Activated CD4-positive, alpha-beta memory T cell treated with anti-CD3 and anti-CD28 coated beads for 36 hours (primary cell): ENCODE measurements at regions of chr6 and their contacts with region 1.

Region 1: DNA sequence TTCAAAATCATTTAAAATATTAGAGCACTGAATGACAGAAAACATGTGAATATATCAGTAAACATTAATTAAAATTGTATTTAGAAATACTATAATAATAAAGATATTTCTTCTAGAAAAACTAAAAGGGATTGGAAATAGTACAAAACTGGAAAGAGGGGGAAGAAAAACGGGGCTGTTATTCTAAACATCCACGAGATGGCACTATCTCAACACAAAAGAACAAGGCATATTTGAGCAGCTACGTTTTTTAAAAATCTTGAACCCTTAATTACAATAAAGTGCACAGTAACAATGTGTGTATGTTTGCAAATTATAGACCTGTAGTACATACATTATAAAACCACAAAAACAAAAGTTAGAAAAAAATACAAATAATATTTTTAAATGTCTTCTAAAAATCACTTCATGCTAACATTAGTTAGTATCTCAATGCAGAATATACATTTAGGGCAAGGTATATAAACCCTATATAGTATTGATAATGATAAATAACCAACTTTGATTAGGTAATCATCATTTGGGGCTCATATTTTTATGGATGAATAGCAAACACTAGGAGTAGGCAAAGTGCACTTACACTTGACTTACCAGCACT is 42.5 kb upstream of the PNISR start:
- DNase-seq: no peak
- H3K4me3 Mint-ChIP-seq: no peak overlapping the region
- H3K27ac Mint-ChIP-seq: no peak overlapping the region
- H3K4me1 Mint-ChIP-seq: no peaks in the 10 kb centered on the region
- H3K27me3 Mint-ChIP-seq: no peaks in the 10 kb centered on the region

Region 2: GRCh38 chr6:99530627-99531026 is 63.0 kb after region 1 on chr6:
- CTCF ChIA-PET with region 1: no interaction called
- POLR2A ChIA-PET with region 1: no interaction called
- intact Hi-C with region 1: no loop called
- DNase-seq: no peak
- H3K4me3 Mint-ChIP-seq: no peak overlapping the region
- H3K27ac Mint-ChIP-seq: no peak overlapping the region
- H3K4me1 Mint-ChIP-seq: no peaks in the 10 kb centered on the region
- H3K27me3 Mint-ChIP-seq: no peaks in the 10 kb centered on the region

Region 3: DNA sequence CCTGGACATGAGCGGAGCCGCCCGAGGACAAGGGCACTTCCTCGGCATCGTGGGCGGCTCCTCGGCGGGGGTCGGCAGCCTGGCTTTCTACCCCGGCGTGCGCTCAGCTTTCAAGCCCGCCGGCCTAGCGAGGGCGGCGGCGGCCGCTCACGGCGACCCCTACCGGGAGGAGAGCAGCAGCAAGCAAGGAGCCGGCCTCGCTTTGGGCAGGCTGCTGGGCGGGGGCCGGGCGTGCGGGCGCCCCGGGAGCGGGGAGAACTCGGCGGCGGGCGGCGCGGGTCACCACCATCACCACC is 145.7 kb after region 1 on chr6:
- CTCF ChIA-PET with region 1: no interaction called
- POLR2A ChIA-PET with region 1: no interaction called
- intact Hi-C with region 1: loop called (anchors 5 kb)
- DNase-seq: peak; percentile 59
- H3K4me3 Mint-ChIP-seq: no peak overlapping the region
- H3K27ac Mint-ChIP-seq: no peak overlapping the region
- H3K4me1 Mint-ChIP-seq: peaks cover 25% of the 10 kb centered on the region
- H3K27me3 Mint-ChIP-seq: peaks cover 78% of the 10 kb centered on the region

Region 4: DNA sequence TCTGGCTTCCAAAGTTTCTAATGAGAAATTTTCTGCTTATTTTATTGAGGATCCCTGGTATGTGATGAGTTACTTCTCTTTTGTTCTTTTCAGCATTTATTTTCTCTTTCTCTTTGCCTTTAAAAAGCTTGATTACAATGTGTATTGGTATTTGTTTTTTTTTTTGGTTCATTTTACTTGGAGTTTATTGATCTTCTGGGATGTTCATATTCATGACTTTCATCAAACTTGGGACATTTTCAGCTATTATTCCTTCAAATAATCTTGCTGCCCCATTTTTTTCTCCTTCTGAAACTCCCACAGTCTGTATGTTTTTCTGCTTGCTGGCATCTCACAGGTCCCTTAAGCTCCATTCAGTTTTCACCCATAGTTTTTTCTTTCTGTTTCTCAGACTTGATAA is 241.5 kb after region 1 on chr6:
- CTCF ChIA-PET with region 1: no interaction called
- POLR2A ChIA-PET with region 1: no interaction called
- intact Hi-C with region 1: no loop called
- DNase-seq: no peak
- H3K4me3 Mint-ChIP-seq: no peak overlapping the region
- H3K27ac Mint-ChIP-seq: no peak overlapping the region
- H3K4me1 Mint-ChIP-seq: no peaks in the 10 kb centered on the region
- H3K27me3 Mint-ChIP-seq: no peaks in the 10 kb centered on the region

Region 5: GRCh38 chr6:99746261-99746895 is 278.8 kb after region 1 on chr6:
- CTCF ChIA-PET with region 1: interaction called, 47 read pairs
- POLR2A ChIA-PET with region 1: no interaction called
- intact Hi-C with region 1: loop called (anchors 1 kb)
- DNase-seq: peak; percentile 56
- H3K4me3 Mint-ChIP-seq: no peak overlapping the region
- H3K27ac Mint-ChIP-seq: no peak overlapping the region
- H3K4me1 Mint-ChIP-seq: no peaks in the 10 kb centered on the region
- H3K27me3 Mint-ChIP-seq: peaks cover 16% of the 10 kb centered on the region